Dendritic cell treated with granulocyte-macrophage colony-stimulating factor and Interleukin-4, amounts not matched to agents 40 ng/mL and 50 ng/mL, for 4 days (primary cell): ENCODE measurements at regions of chr5 and their contacts with region 1.

Region 1: DNA sequence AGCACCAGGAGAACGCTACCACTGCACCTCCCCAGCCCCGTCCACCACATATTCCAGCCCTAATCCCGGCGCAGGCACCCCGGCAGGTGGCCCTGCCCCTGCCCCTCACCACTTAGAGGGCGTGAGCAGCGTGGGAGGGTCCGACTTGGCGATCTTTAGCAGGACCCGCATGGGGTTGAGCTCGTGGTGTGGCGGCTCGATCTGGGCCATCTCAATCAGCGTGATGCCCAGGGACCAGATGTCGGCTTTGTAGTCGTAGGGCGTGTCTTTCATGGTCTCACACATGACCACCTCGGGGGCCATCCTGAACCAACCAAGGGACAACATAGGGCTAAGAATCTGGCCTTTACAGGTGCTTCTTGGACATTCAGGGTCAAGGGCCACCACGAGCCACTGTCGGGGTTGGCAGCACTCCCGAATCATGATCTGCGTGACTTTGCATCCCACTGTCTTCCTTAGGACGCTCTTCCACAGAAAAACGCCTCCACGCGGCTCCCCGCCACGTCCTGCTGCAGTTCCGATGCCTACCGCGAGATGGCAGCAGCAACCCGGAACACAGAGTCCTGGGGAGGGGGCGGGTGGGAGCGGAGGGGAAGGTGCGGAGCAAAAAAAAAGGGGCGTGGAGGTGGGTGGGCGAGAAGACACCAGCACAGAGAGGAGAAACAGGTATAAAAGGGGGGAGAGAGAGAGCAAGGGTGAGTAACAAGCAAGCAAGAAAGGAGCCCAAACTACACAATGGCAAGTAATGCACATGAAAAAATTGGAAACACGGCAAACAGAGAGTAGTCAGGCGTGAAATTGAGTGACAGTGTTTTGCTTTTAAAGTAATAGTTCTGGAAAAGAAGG is 81.3 kb downstream of the STK10 start:
- H3K4me3 Mint-ChIP-seq: no peak overlapping the region
- H3K27ac Mint-ChIP-seq: no peak overlapping the region
- H3K4me1 Mint-ChIP-seq: peaks cover 72% of the 10 kb centered on the region
- H3K27me3 Mint-ChIP-seq: no peaks in the 10 kb centered on the region

Region 2: DNA sequence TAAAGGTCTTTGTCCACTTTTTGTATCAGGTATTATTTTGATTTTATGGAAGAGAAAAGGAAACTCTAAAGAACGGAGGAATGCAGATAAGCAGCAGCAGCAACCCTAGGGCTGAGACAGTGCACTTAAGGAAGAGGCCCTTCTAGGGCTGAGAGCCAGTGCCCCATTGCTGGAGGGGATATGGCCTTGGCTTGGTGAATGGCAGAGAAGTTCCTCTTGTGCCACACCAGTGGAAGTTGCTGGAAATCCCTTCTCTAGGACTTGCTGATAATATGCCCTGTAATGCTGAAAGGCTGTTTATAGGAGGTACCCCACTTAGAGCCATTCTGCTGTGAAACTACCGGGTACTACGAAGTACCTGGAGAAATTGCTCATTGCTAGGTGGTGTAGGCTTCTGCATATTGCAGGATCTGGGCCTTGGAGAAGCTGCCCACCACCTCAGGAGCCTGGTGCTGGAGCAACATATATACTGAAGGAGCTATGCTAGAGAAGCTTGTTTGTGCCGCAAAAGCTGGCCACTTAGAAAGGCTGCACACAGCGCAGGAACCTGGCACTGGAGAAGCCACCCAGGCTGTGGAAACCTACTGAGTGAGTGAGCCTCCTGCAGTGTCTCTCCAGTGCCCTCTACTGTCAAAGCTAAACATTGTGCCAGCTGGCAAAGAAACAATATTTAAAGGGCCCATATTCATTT is 186.5 kb after region 1 on chr5:
- intact Hi-C with region 1: loop called (anchors 1 kb)
- H3K4me3 Mint-ChIP-seq: no peak overlapping the region
- H3K27ac Mint-ChIP-seq: no peak overlapping the region
- H3K4me1 Mint-ChIP-seq: peaks cover 18% of the 10 kb centered on the region
- H3K27me3 Mint-ChIP-seq: peaks cover 1% of the 10 kb centered on the region